ENCODE measurements at regions of chr18 and their contacts with region 1.

Region 1: GRCh38 chr18:68152770-68153169 is 562.1 kb downstream of the TMX3 start:
- DNase-seq: peak; percentile 73
- ATAC-seq: peak; percentile 99
- H3K4me3 Mint-ChIP-seq: no peak overlapping the region
- H3K27ac Mint-ChIP-seq: no peak overlapping the region
- H3K4me1 Mint-ChIP-seq: peaks cover 5% of the 10 kb centered on the region
- H3K27me3 Mint-ChIP-seq: no peaks in the 10 kb centered on the region
- CTCF ChIP-seq: 0 out of 2 replicates have a peak, but pooled peaks have one; percentile 18

Region 2: GRCh38 chr18:68172842-68173549 is 20.2 kb after region 1 on chr18:
- CTCF ChIA-PET with region 1: interaction called, 17 read pairs
- POLR2A ChIA-PET with region 1: no interaction called
- DNase-seq: peak; percentile 54
- ATAC-seq: peak; percentile 96
- H3K4me3 Mint-ChIP-seq: no peak overlapping the region; the same call in 1 of the 2 replicates
- H3K27ac Mint-ChIP-seq: no peak overlapping the region
- H3K4me1 Mint-ChIP-seq: 0 out of 2 replicates have a peak, but pooled peaks cover 4% of the 10 kb centered on the region
- H3K27me3 Mint-ChIP-seq: no peaks in the 10 kb centered on the region
- CTCF ChIP-seq: no peak